CD4-positive, alpha-beta memory T cell (primary cell): ENCODE measurements at regions of chr2 and their contacts with region 1.

Region 1: DNA sequence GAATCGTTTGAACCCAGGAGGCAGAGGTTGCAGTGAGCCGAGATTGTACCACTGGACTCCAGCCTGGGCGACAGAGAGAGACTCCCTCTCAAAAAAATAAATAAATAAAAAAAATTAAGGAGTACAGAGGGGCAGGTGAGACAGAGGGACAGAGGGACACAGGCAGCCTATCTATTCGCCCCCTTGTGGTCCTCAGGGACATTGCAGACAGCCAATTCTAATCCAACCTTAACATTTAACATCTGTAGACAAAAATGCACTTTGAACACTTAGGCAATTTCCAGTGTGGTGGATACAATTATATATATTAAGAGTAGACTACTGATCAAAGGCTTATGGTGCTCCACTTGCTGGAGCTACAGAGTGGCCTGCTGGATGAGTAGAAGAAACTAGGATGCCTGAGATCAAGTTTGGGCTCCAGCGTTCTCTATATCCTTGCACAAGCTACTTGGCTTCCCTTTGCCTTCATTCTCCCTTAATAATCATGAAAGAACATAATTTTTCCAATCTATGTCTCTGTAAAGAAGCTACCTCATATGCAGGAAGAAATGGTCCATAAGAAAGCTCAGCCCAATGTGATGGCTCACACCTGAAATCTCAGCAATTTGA is 8.2 kb upstream of the SMARCAL1 start:
- DNase-seq: peak in 4 of 5 donors; percentile 40 to 51 (median 43)
- H3K4me3 ChIP-seq: no peak overlapping the region
- H3K4me3 Mint-ChIP-seq: no peak overlapping the region
- H3K27ac ChIP-seq: no peak overlapping the region
- H3K27ac Mint-ChIP-seq: no peak overlapping the region
- H3K4me1 ChIP-seq: no peaks in the 10 kb centered on the region
- H3K4me1 Mint-ChIP-seq: peaks cover 0 to 1% (median under 1%) of the 10 kb centered on the region in 4 donors
- H3K27me3 ChIP-seq: peaks cover 3% of the 10 kb centered on the region
- H3K27me3 Mint-ChIP-seq: peaks cover 1 to 5% of the 10 kb centered on the region in 2 donors

Region 2: GRCh38 chr2:216215658-216216390 is 188.3 kb before region 1 on chr2:
- CTCF ChIA-PET with region 1: interaction called, 79 read pairs
- POLR2A ChIA-PET with region 1: no interaction called
- intact Hi-C with region 1: no loop called
- DNase-seq: no peak
- H3K4me3 ChIP-seq: no peak overlapping the region
- H3K4me3 Mint-ChIP-seq: no peak overlapping the region
- H3K27ac ChIP-seq: no peak overlapping the region
- H3K27ac Mint-ChIP-seq: no peak overlapping the region
- H3K4me1 ChIP-seq: peaks cover 10% of the 10 kb centered on the region
- H3K4me1 Mint-ChIP-seq: peaks cover 13 to 31% (median 21%) of the 10 kb centered on the region in 4 donors
- H3K27me3 ChIP-seq: no peaks in the 10 kb centered on the region
- H3K27me3 Mint-ChIP-seq: no peaks in the 10 kb centered on the region

Region 3: GRCh38 chr2:216328347-216328746 is 75.8 kb before region 1 on chr2:
- CTCF ChIA-PET with region 1: interaction called, 49 read pairs
- POLR2A ChIA-PET with region 1: no interaction called
- intact Hi-C with region 1: loop called (anchors 1 kb)
- DNase-seq: peak in 3 of 5 donors; percentile 15 to 20 (median 19)
- H3K4me3 ChIP-seq: no peak overlapping the region
- H3K4me3 Mint-ChIP-seq: no peak overlapping the region
- H3K27ac ChIP-seq: no peak overlapping the region
- H3K27ac Mint-ChIP-seq: no peak overlapping the region
- H3K4me1 ChIP-seq: no peaks in the 10 kb centered on the region
- H3K4me1 Mint-ChIP-seq: peaks cover 0 to 3% (median 0%) of the 10 kb centered on the region in 4 donors
- H3K27me3 ChIP-seq: no peaks in the 10 kb centered on the region
- H3K27me3 Mint-ChIP-seq: no peaks in the 10 kb centered on the region

Region 4: GRCh38 chr2:216388046-216388884 is 15.8 kb before region 1 on chr2:
- CTCF ChIA-PET with region 1: interaction called, 24 read pairs
- POLR2A ChIA-PET with region 1: no interaction called
- intact Hi-C with region 1: no loop called
- DNase-seq: peak in 3 of 5 donors; percentile 39 to 42 (median 41)
- H3K4me3 ChIP-seq: no peak overlapping the region
- H3K4me3 Mint-ChIP-seq: peak overlapping the region in 5 of 8 donors; percentile 33 to 72 (median 41)
- H3K27ac ChIP-seq: peak overlapping the region; percentile 25
- H3K27ac Mint-ChIP-seq: peak overlapping the region; percentile 33 to 91 (median 68)
- H3K4me1 ChIP-seq: peaks cover 13% of the 10 kb centered on the region
- H3K4me1 Mint-ChIP-seq: peaks cover 12 to 21% (median 14%) of the 10 kb centered on the region in 4 donors
- H3K27me3 ChIP-seq: no peaks in the 10 kb centered on the region
- H3K27me3 Mint-ChIP-seq: no peaks in the 10 kb centered on the region